Activated naive CD4-positive, alpha-beta T cell treated with anti-CD3 and anti-CD28 coated beads for 36 hours (primary cell): ENCODE measurements at regions of chr6 and their contacts with region 1.

Region 1: GRCh38 chr6:144931172-144932035 is 646.3 kb downstream of the UTRN start:
- DNase-seq: peak; percentile 65
- H3K4me3 Mint-ChIP-seq: no peak overlapping the region
- H3K27ac Mint-ChIP-seq: no peak overlapping the region
- H3K4me1 Mint-ChIP-seq: no peaks in the 10 kb centered on the region
- H3K27me3 Mint-ChIP-seq: no peaks in the 10 kb centered on the region

Region 2: DNA sequence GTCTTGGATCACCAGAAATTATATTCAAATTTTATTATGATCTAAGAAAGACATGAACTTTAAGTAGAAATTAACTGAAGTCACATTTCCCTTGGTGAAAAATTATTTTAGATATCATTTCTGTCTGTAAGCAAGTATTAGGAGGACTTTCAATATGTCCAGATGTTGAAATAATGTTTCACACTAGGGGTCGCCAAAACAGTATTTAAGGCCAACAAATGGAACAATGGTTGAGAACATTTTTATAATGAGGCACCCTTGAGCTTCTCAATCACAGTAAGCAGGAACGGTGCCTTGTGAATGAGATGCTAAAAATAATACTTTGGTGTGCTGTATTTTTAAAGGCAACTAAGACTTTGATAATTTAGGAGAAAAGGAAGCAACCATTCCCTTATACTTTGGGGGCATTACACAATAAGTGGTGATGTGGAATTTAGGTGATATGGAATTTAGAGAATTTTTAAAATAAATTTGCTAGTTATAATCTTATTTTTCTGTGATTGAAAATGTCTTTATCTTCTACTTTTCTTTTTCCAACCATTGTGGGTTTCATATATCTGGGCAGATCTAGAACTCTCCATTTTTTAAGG is 826.4 kb before region 1 on chr6:
- CTCF ChIA-PET with region 1: no interaction called
- intact Hi-C with region 1: loop called (anchors 10 kb)
- DNase-seq: peak; percentile 48
- H3K4me3 Mint-ChIP-seq: no peak overlapping the region
- H3K27ac Mint-ChIP-seq: no peak overlapping the region
- H3K4me1 Mint-ChIP-seq: peaks cover 11% of the 10 kb centered on the region
- H3K27me3 Mint-ChIP-seq: no peaks in the 10 kb centered on the region

Region 3: GRCh38 chr6:144248476-144249301 is 682.7 kb before region 1 on chr6:
- CTCF ChIA-PET with region 1: no interaction called
- intact Hi-C with region 1: loop called (anchors 10 kb)
- DNase-seq: peak; percentile 9
- H3K4me3 Mint-ChIP-seq: no peak overlapping the region
- H3K27ac Mint-ChIP-seq: peak overlapping the region; percentile 32
- H3K4me1 Mint-ChIP-seq: peaks cover 16% of the 10 kb centered on the region
- H3K27me3 Mint-ChIP-seq: peaks cover 4% of the 10 kb centered on the region

Region 4: DNA sequence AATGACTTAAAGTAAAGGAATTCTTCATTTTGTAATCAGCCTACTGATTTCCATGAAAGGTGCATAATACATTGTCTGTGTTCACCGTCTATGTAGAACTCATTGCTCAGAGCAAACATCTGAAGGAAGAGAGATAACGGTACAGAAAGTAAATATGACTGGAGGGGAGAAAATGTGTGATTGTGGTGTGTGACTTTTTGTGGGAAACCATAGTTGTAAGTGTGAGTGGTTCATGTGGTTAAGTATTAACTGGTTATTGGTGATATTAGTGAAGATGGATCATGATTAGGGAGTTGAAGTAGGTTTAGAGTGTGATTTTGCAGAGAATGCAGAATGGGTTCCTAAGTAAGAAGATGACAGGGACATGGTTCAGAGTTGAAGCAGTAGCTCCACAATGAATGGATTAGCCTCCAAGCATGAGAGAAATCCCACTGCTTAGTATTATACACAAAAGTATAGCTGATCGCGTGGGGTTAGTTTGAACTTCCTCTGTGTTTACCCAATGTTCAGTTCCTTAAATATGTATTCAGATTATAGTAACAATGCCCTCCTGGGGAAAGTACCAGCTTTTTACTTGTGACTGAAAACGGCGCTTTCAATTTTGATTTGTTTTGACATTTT is 277.4 kb before region 1 on chr6:
- CTCF ChIA-PET with region 1: no interaction called
- intact Hi-C with region 1: loop called (anchors 5 kb)
- DNase-seq: peak; percentile 12
- H3K4me3 Mint-ChIP-seq: peak overlapping the region; percentile 14
- H3K27ac Mint-ChIP-seq: no peak overlapping the region
- H3K4me1 Mint-ChIP-seq: peaks cover 37% of the 10 kb centered on the region
- H3K27me3 Mint-ChIP-seq: no peaks in the 10 kb centered on the region

Region 5: DNA sequence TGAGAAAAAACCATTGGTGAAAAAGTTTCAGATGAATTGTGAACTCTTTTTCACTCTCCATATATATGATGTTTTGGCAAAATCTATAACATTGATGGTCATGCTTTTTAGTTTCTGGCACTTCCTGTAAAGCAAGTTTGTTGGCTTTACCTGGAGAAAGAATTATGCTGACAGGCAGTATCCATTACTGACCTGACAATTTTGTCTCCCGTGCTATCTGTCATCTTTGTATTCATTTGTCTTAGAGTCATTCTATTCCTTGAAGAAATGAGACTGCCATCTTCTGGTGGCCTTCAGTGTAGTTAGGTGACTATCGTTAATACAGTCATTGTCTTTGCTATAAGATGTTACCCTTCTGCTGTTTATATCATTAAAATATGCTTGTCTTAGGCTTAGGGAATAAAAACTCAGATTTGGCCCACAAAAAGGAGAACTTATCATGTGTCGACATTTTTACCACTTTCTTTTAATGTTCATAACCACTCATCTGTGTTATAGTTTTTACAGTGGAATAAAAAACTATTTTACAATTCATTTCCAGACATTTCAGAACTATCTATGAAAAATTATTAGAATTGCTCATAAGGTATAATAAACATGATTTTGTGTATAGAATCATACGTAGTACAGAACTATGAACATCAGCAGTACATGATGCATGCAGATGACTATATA is 96.9 kb after region 1 on chr6:
- CTCF ChIA-PET with region 1: no interaction called
- intact Hi-C with region 1: loop called (anchors 5 kb)
- DNase-seq: peak; percentile 38
- H3K4me3 Mint-ChIP-seq: no peak overlapping the region
- H3K27ac Mint-ChIP-seq: no peak overlapping the region
- H3K4me1 Mint-ChIP-seq: no peaks in the 10 kb centered on the region
- H3K27me3 Mint-ChIP-seq: peaks cover 24% of the 10 kb centered on the region

Region 6: GRCh38 chr6:145214570-145214969 is 283.2 kb after region 1 on chr6:
- CTCF ChIA-PET with region 1: no interaction called
- intact Hi-C with region 1: loop called (anchors 5 kb)
- DNase-seq: no peak
- H3K4me3 Mint-ChIP-seq: no peak overlapping the region
- H3K27ac Mint-ChIP-seq: no peak overlapping the region
- H3K4me1 Mint-ChIP-seq: peaks cover 7% of the 10 kb centered on the region
- H3K27me3 Mint-ChIP-seq: peaks cover 6% of the 10 kb centered on the region